ENCODE measurements at regions of chr4 and their contacts with region 1.

Region 1: GRCh38 chr4:80045786-80046185 is 27.2 kb downstream of the ANTXR2 start:
- DNase-seq: no peak
- H3K4me3 ChIP-seq: no peak overlapping the region
- H3K27ac ChIP-seq: peak overlapping the region; percentile 11 to 69
- H3K4me1 ChIP-seq: no peaks in the 10 kb centered on the region
- H3K27me3 ChIP-seq: no peaks in the 10 kb centered on the region
- CTCF ChIP-seq: no peak
- POLR2A ChIP-seq: no peak

Region 2: DNA sequence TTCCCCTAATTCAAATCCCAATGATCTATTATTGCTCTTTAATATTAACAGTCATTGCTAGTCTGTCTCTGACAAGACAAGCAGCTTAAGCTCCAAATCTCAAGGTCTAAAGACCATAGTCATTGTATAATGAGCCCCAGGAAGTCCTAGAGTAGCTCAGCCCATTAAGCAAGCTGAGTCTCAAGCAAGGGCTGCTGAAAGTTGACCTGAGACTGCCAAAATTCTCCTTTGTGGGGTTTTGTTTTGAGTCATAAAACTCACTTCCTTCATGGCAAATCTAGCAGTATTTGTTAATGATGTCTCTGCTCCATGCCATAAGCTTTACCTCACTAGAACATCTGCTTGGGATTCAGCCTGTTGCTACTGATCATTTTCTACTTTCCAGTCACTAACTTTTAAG is 286.0 kb before region 1 on chr4:
- intact Hi-C with region 1: loop called (anchors 5 kb)
- DNase-seq: no peak
- H3K4me3 ChIP-seq: no peak overlapping the region
- H3K27ac ChIP-seq: no peak overlapping the region
- H3K4me1 ChIP-seq: no peaks in the 10 kb centered on the region
- H3K27me3 ChIP-seq: no peaks in the 10 kb centered on the region
- CTCF ChIP-seq: no peak
- POLR2A ChIP-seq: no peak

Region 3: DNA sequence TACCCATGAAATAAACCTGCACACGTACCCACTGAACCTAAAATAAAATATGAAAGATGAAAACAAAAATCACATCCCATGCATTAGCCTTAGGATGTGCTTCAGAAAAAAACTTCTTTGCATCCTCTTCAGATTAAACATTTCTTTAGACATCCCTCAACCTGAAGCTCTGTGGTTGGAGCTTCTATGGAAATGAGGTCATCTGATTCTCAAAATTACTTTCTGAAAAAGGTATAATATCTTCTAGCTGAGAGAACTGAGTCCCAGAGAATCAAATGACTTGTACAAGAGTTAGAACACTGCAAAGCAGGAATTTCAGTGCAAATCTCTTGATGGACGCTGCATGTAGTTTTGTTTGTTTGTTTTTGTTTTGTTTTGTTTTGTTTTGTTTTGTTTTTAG is 46.3 kb after region 1 on chr4:
- intact Hi-C with region 1: loop called (anchors 2 kb)
- DNase-seq: no peak
- H3K4me3 ChIP-seq: no peak overlapping the region
- H3K27ac ChIP-seq: no peak overlapping the region
- H3K4me1 ChIP-seq: no peaks in the 10 kb centered on the region
- H3K27me3 ChIP-seq: no peaks in the 10 kb centered on the region
- CTCF ChIP-seq: no peak
- POLR2A ChIP-seq: no peak